Activated CD4-positive, alpha-beta T cell treated with anti-CD3 and anti-CD28 coated beads for 36 hours (primary cell): ENCODE measurements at regions of chr13 and their contacts with region 1.

Region 1: DNA sequence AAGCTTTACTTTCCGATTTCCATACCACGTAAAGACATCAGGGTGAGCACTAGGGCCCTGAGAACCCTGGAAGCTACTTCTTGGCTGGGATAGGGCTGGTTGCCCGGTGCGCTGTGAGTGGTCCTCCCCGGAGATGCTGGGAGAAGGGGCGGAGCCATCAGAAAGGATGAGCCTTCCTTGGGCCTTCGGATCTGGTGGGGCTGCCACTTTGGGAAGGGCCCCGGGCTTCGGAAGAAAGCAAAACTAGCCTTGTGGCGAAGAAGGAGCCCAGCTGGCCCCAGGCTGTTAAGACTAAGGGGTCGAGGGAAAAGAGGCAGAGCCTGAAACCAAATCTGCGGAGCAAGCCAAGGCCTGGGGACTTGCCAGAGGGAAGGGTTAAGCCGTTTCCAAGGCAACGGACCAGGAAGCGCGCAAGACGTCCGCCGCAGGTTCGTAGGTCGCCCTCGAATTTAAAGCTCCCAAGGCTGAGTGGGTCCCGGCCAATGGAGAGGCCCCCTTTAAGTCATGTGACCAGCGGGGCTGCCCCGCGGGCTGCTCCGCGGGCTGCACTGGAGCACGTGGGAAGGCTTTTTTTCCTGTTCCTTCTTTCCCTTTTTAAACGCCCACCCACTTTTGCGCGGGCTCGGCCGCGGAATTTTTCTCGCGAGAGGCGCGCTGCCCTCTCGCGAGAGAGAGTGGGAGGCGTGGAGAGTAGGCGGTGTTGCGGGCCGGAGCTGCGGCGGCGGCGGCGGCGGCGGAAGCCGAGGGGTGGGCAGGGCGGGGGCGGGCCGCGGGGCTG is 426 bp upstream of the AKAP11 start:
- DNase-seq: peak; percentile 95
- ATAC-seq: peak; percentile 87
- H3K4me3 Mint-ChIP-seq: peak overlapping the region; percentile 99
- H3K27ac Mint-ChIP-seq: peak overlapping the region; percentile 93
- H3K4me1 Mint-ChIP-seq: peaks cover 48% of the 10 kb centered on the region
- H3K27me3 Mint-ChIP-seq: no peaks in the 10 kb centered on the region

Region 2: GRCh38 chr13:41263261-41264027 is 1008.1 kb before region 1 on chr13 and contains the start of gene MTRF1:
- CTCF ChIA-PET with region 1: no interaction called
- POLR2A ChIA-PET with region 1: no interaction called
- intact Hi-C with region 1: loop called in 1 of 2 experiments (anchors 5 kb)
- DNase-seq: peak; percentile 89
- ATAC-seq: peak; percentile 93
- H3K4me3 Mint-ChIP-seq: peak within 1 kb of the TSS; percentile 80
- H3K27ac Mint-ChIP-seq: peak within 1 kb of the TSS; percentile 95
- H3K4me1 Mint-ChIP-seq: peaks cover 12% of the 10 kb centered on the region
- H3K27me3 Mint-ChIP-seq: no peaks in the 10 kb centered on the region
- total RNA-seq, gene MTRF1: 19.7 to 22.1 TPM

Region 3: DNA sequence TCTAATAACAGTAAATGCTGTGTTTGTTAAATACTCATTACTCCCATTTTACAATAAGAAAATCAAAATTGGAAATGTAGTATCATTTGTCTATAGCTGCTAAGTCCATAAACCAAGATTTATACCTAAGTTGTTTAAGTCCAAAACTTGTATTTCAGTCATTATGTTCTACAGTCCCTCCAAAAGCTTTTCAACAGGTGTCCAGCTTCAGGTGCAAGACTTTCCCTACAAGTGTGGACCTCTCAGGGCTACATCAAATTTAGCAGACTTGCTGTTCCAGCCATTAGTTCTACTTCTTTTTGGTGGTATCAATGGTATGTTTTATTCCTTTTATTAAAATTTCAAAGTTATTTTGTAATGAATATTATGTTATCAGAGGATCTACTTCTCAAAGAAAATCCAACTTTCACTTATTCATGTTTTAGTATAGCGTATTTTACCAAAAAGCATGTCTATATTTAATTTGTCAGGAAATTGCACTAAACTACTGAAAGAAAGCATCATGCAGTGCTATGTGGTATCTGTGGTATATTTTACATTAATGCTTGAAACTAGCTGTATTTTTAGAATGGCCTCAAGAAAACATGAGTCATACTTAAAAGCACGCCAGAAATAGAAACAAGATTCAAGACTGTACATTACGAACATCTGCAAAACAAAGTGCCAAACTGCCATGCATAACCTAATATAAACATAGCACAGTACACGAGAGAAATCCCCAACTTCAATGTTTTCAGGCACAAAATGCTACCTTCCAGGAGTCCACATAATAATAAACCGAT is 355.2 kb before region 1 on chr13:
- CTCF ChIA-PET with region 1: interaction called, 3 read pairs
- POLR2A ChIA-PET with region 1: no interaction called
- intact Hi-C with region 1: loop called (anchors 5 to 10 kb)
- DNase-seq: no peak
- ATAC-seq: peak; percentile 66
- H3K4me3 Mint-ChIP-seq: peak overlapping the region; percentile 57
- H3K27ac Mint-ChIP-seq: peak overlapping the region; percentile 97
- H3K4me1 Mint-ChIP-seq: peaks cover 67% of the 10 kb centered on the region
- H3K27me3 Mint-ChIP-seq: no peaks in the 10 kb centered on the region

Region 4: DNA sequence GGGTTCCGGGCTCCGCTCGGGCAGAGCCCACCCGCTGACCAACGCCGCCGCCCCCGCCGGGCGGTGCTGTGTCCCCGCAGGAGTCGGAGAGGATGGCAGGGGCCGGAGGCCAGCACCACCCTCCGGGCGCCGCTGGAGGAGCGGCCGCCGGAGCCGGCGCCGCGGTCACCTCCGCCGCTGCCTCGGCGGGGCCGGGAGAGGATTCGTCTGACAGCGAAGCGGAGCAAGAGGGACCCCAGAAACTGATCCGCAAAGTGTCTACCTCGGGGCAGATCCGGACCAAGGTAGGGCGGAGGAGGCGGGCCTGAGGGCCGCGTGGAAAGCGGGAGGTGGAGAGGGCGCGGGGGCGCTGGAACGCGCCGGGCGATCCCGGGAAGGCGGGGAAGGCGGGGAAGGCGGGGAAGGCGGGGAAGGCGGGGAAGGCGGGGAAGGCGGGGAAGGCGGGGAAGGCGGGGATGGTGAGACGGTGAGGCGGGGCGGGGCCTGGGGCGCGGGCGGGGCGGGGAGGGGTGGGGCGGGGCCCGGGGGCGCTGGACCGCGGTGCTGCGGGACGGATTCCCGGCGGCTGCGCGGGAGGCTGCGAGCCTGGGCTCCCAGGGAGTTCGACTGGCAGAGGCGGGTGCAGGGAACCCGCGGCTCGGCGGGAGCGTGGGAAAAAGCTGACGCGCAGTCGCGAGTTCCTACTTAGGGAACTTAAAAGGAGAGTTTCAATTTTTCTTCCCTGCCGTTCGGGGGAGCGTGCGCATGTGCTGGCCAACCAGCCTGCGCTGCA is 222.7 kb before region 1 on chr13:
- CTCF ChIA-PET with region 1: no interaction called
- POLR2A ChIA-PET with region 1: no interaction called
- intact Hi-C with region 1: loop called (anchors 2 to 10 kb)
- DNase-seq: peak; percentile 82
- ATAC-seq: peak; percentile 68
- H3K4me3 Mint-ChIP-seq: peak overlapping the region; percentile 86
- H3K27ac Mint-ChIP-seq: no peak overlapping the region
- H3K4me1 Mint-ChIP-seq: peaks cover 24% of the 10 kb centered on the region
- H3K27me3 Mint-ChIP-seq: no peaks in the 10 kb centered on the region

Region 5: GRCh38 chr13:42392716-42393572 is 121.4 kb after region 1 on chr13:
- CTCF ChIA-PET with region 1: interaction called, 3 read pairs
- POLR2A ChIA-PET with region 1: interaction called, 6 read pairs
- intact Hi-C with region 1: loop called (anchors 2 to 5 kb)
- DNase-seq: peak; percentile 46
- ATAC-seq: peak; percentile 57
- H3K4me3 Mint-ChIP-seq: peak overlapping the region; percentile 80
- H3K27ac Mint-ChIP-seq: peak overlapping the region; percentile 100
- H3K4me1 Mint-ChIP-seq: peaks cover 80% of the 10 kb centered on the region
- H3K27me3 Mint-ChIP-seq: no peaks in the 10 kb centered on the region

Region 6: GRCh38 chr13:42453091-42453645 is 181.6 kb after region 1 on chr13:
- CTCF ChIA-PET with region 1: no interaction called
- POLR2A ChIA-PET with region 1: no interaction called
- intact Hi-C with region 1: no loop called
- DNase-seq: no peak
- ATAC-seq: no peak
- H3K4me3 Mint-ChIP-seq: no peak overlapping the region
- H3K27ac Mint-ChIP-seq: no peak overlapping the region
- H3K4me1 Mint-ChIP-seq: peaks cover 19% of the 10 kb centered on the region
- H3K27me3 Mint-ChIP-seq: no peaks in the 10 kb centered on the region

Region 7: GRCh38 chr13:42991892-42992763 is 720.6 kb after region 1 on chr13 and contains the start of gene EPSTI1:
- CTCF ChIA-PET with region 1: no interaction called
- POLR2A ChIA-PET with region 1: no interaction called
- intact Hi-C with region 1: loop called in 1 of 2 experiments (anchors 5 kb)
- DNase-seq: peak; percentile 87
- ATAC-seq: peak; percentile 81
- H3K4me3 Mint-ChIP-seq: peak within 1 kb of the TSS; percentile 84
- H3K27ac Mint-ChIP-seq: peak within 1 kb of the TSS; percentile 99
- H3K4me1 Mint-ChIP-seq: peaks cover 45% of the 10 kb centered on the region
- H3K27me3 Mint-ChIP-seq: no peaks in the 10 kb centered on the region
- total RNA-seq, gene EPSTI1: 30.7 to 32.0 TPM